ENCODE measurements at regions of chr12 and their contacts with region 1.

Region 1: GRCh38 chr12:11746024-11746771 is 96.7 kb downstream of the ETV6 start:
- DNase-seq: peak; percentile 51
- H3K4me3 ChIP-seq: no peak overlapping the region
- H3K27ac ChIP-seq: peak overlapping the region; percentile 100
- H3K4me1 ChIP-seq: peaks cover 100% of the 10 kb centered on the region
- CTCF ChIP-seq: no peak

Region 2: DNA sequence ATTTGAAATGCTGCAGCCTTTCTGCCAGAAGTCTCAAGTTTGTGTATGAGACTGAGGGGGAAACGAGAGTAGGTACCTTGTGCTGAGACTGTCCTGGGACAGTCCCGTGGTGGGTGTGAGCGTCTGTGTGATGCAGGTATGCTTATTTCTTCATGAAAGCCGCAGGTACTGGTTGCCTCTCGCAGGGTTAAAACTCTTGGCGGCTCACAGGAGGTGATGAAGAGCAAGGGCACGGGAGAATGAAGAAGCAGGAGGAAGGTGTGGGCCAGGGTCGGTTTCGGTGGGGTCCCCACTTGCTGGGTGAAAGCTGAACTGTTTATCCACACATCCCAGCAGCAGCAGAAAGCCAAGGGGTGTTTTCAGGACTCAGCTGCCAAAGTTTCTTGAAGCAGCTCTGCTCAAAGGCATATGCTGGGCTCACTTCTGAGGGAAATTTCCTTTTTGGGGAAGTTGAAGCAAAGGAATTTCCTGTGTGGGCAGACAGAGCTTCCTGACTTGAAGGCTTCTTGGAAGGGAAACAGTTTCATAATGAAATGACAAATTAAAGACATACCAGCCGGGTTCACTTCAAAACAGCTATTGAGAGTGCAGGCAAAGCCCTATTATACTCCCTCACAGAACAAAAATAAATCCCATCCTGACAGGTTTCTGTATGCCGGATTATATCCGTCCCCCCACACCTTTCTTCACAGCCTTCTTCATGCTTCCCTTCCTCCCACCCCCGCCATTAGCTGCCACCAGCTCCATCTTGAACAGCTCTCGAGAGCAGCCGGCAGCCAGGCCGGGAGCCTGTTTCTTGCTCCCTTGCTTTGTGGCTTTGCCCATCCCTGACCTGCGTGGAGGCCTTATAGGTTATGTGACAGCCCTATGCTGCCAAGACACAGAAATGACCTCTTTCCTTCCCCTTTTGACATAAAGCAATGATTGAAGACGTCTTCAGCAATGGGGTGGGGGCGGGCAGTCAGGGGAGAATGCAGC is 19.9 kb after region 1 on chr12:
- CTCF ChIA-PET with region 1: no interaction called
- POLR2A ChIA-PET with region 1: interaction called, 119 read pairs
- intact Hi-C with region 1: no loop called
- DNase-seq: no peak
- H3K4me3 ChIP-seq: peak overlapping the region; percentile 4
- H3K27ac ChIP-seq: peak overlapping the region; percentile 26
- H3K4me1 ChIP-seq: peaks cover 84% of the 10 kb centered on the region
- CTCF ChIP-seq: no peak

Region 3: DNA sequence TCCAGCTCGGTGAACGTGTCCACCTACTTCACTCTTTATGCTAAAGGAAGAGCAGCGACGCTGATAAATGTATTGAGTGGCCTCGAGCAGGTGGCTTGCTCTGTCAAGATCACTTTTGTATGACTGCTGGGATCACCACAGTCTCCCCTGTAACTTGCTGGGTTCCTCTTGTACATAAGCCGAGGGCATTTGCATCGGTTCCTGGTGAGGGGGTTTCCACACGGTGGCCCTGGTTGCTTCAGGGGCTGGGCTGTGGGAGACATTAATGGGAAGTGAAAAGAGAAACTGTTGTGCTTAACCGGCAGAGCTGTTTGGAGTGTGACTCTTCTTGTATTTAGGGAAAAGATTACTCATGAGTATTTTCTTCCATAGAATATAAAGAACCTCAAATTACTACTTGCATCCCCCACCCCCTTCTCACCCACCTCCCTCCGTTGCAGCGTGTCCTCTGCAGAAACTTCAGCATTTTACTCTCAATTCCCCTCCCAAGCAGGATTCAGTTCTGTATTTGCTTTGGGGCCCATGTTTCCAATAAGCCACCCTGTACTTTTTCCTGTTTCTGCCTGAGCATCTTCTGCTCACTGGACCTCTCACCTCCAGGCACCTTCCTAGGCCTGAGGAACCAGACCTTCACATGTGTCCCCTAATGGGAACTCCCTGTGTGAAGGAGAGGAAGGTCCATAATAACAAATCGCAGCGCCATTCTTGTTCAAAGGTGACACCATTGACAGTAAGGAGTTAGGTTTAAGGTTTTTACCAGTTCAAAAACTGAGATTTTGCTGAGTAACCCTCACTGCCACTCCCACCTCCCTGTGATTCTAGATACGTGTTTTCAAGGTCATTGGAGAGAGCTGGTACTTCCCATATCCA is 90.3 kb after region 1 on chr12:
- CTCF ChIA-PET with region 1: no interaction called
- POLR2A ChIA-PET with region 1: interaction called, 3 read pairs
- intact Hi-C with region 1: loop called (anchors 2 kb)
- DNase-seq: peak; percentile 95
- H3K4me3 ChIP-seq: peak overlapping the region; percentile 37
- H3K27ac ChIP-seq: peak overlapping the region; percentile 91
- H3K4me1 ChIP-seq: peaks cover 72% of the 10 kb centered on the region
- CTCF ChIP-seq: 0 out of 2 replicates have a peak, but pooled peaks have one; percentile 8

Region 4: GRCh38 chr12:12684375-12685106 is 938.3 kb after region 1 on chr12:
- CTCF ChIA-PET with region 1: no interaction called
- POLR2A ChIA-PET with region 1: no interaction called
- intact Hi-C with region 1: no loop called
- DNase-seq: peak; percentile 17
- H3K4me3 ChIP-seq: no peak overlapping the region
- H3K27ac ChIP-seq: no peak overlapping the region
- H3K4me1 ChIP-seq: no peaks in the 10 kb centered on the region
- CTCF ChIP-seq: no peak

Measured in OCI-LY7 (cell line).